Left ventricle myocardium inferior (tissue), 1 donor: ENCODE measurements at regions of chr10 and their contacts with region 1.

Region 1: DNA sequence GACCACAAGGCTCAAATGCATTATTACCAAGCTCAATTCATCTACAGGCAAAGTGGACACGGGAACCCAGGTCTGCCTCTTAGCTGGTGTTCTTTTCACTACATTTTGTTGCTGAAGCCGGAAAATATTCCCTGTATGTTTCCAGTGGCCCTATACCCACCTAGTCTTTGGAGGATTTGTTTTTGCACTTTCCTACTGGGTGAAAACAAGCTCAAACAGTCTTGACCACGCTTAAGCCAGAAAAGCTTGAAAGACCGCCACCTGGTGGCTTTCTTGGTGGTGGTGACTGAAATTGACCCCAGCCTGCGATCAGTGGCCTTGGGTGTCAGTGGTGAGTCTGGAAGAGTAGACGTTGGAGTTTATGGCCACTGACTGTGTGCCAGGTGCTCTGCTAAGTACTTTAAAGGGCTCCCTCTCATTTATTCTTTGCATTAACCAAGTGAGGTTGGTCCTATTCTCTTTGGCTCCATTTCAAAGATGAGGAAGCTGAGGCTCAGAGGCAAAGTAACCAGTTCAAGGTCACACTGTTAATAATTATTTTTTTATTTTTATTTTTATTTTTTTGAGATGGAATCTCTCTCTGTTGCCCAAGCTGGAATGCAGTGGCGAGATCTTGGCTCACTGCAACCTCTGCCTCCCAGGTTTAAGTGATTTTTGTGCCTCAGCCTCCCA is 11.1 kb upstream of the CRTAC1 start:
- DNase-seq: peak; percentile 44
- H3K4me3 ChIP-seq: no peak overlapping the region
- H3K27ac ChIP-seq: no peak overlapping the region
- H3K4me1 ChIP-seq: peaks cover 16% of the 10 kb centered on the region
- H3K27me3 ChIP-seq: peaks cover 77% of the 10 kb centered on the region
- CTCF ChIP-seq: peak; percentile 73

Region 2: DNA sequence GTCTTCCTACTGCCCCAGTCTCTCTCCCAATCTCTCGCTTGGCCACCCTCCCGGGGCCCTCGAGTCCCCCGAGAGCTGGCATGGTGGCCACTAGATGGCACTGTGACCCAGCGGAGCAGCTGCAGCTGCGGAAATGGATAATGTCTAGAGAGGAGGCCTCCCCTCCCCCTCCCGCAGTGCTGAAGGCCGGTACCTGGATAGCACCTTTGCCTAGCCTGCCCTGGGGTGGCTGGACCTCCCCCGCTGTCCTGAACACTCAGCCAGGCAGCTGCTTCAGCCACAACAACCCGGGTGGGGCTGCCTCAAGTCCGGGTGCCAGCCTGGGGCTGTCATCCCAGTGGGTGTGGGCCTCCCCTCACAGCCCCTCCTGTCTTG is 126.7 kb before region 1 on chr10:
- intact Hi-C with region 1: loop called (anchors 5 kb)
- DNase-seq: peak; percentile 67
- H3K4me3 ChIP-seq: peak overlapping the region; percentile 7
- H3K27ac ChIP-seq: no peak overlapping the region
- H3K4me1 ChIP-seq: peaks cover 30% of the 10 kb centered on the region
- H3K27me3 ChIP-seq: peaks cover 5% of the 10 kb centered on the region
- CTCF ChIP-seq: peak; percentile 94

Region 3: DNA sequence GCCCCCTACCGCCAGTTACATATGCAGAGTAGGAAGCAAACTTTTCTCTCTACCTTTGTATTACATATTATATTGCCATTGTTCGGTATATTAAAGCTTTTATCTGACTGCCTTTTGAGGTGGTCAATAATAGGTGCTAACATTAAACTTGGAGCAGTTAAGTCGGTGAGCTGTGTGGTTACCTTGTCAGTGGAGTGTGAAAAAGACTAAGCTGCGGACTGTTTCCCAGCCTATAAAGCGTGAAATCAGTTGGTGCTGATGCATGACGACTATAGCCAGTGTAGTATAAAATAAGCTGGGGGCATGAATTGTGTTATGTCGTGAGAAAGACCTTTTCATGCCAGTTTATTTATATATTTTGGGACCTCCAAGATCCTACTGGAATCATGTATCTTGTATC is 126.6 kb after region 1 on chr10:
- intact Hi-C with region 1: no loop called
- DNase-seq: no peak
- H3K4me3 ChIP-seq: no peak overlapping the region
- H3K27ac ChIP-seq: no peak overlapping the region
- H3K4me1 ChIP-seq: peaks cover 33% of the 10 kb centered on the region
- H3K27me3 ChIP-seq: no peaks in the 10 kb centered on the region
- CTCF ChIP-seq: no peak